ENCODE measurements at regions of chrX and their contacts with region 1.

Region 1: GRCh38 chrX:40013266-40014195 is 84.2 kb downstream of the BCOR start:
- DNase-seq: peak; percentile 81 to 90 (median 87)
- ATAC-seq: peak; percentile 70 to 76
- H3K4me3 ChIP-seq: peak overlapping the region; percentile 29
- H3K27ac ChIP-seq: peak overlapping the region; percentile 96
- H3K4me1 ChIP-seq: peaks cover 8% of the 10 kb centered on the region
- H3K27me3 ChIP-seq: no peaks in the 10 kb centered on the region

Region 2: DNA sequence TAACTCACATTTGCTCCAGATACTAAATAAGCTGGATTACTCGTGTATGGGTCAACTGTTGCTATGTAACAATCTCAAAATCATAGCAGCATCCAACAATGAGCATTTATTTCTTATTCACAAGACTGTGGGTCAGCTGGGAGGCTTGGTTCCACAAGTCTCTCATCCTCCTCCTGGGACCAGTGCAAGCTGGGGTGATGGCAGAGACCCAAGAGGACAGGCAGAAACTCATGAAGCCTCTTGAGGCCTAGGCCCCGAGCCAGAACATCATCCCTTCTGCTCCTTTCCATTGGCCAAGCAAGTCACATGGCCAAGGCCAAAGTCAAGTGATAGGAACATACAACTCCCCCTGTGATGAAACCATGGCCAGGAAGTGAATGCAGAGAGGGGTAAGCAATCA is 337.9 kb before region 1 on chrX:
- intact Hi-C with region 1: no loop called
- DNase-seq: peak; percentile 81 to 86 (median 82)
- ATAC-seq: peak; percentile 69 to 75
- H3K4me3 ChIP-seq: no peak overlapping the region
- H3K27ac ChIP-seq: no peak overlapping the region
- H3K4me1 ChIP-seq: peaks cover 3% of the 10 kb centered on the region
- H3K27me3 ChIP-seq: no peaks in the 10 kb centered on the region

Region 3: DNA sequence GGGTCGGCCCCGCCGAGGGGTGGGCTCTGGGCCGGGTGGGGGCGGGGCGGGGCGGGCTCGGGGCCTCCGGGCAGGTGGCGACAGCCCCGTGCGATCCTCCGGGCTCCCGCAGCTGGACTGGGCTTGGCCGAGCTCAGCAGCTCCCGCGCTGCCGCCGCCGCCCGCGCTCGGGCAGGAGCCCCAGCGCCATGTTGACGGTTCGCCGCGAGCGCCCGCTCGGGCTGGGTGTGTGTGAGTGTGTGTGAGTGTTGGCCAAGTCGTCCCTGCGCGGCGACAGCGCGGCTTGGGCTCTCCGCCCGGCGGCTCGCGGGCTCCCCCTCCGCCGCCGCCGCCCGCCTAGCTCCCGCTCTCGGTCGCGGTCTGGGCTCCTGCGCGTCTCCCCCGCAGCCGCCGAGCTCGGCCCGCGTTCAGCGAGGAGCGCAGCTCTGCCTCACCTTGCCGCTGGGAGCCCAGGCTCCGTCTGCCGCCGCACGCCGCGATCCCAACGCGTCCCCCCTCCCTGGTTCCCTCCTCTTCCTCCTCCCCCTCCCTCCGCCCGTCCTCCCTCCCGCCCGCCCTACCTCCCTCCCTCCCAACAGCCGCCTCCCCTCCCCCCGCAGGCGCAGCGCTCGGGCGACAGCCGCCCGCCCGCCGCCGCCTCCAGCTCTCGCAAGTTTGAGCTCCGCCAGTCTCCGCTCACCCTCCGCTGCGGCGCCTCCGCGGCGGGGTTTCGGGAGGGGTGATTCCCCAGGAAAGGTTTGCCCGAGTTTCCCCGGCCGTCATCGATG is 84.1 kb after region 1 on chrX and contains the start of gene BCOR:
- intact Hi-C with region 1: loop called in 2 of 4 experiments (anchors 10 kb)
- DNase-seq: peak; percentile 78 to 92 (median 89)
- ATAC-seq: peak; percentile 51 to 62
- H3K4me3 ChIP-seq: peak within 1 kb of the TSS; percentile 97
- H3K27ac ChIP-seq: peak within 1 kb of the TSS; percentile 96
- H3K4me1 ChIP-seq: no peaks in the 10 kb centered on the region
- H3K27me3 ChIP-seq: no peaks in the 10 kb centered on the region
- total RNA-seq, gene BCOR: 18.1 to 30.1 (median 20.5) TPM

Region 4: GRCh38 chrX:40169193-40170101 is 155.9 kb after region 1 on chrX:
- intact Hi-C with region 1: loop called in 1 of 4 experiments (anchors 5 kb)
- DNase-seq: peak in 2 of 3 donors; percentile 81
- ATAC-seq: peak in 1 of 2 donors; percentile 2
- H3K4me3 ChIP-seq: no peak overlapping the region
- H3K27ac ChIP-seq: no peak overlapping the region
- H3K4me1 ChIP-seq: peaks cover 5% of the 10 kb centered on the region
- H3K27me3 ChIP-seq: no peaks in the 10 kb centered on the region

Measured in right cardiac atrium (tissue), 5 donors.